ENCODE measurements at regions of chr6 and their contacts with region 1.

Region 1: DNA sequence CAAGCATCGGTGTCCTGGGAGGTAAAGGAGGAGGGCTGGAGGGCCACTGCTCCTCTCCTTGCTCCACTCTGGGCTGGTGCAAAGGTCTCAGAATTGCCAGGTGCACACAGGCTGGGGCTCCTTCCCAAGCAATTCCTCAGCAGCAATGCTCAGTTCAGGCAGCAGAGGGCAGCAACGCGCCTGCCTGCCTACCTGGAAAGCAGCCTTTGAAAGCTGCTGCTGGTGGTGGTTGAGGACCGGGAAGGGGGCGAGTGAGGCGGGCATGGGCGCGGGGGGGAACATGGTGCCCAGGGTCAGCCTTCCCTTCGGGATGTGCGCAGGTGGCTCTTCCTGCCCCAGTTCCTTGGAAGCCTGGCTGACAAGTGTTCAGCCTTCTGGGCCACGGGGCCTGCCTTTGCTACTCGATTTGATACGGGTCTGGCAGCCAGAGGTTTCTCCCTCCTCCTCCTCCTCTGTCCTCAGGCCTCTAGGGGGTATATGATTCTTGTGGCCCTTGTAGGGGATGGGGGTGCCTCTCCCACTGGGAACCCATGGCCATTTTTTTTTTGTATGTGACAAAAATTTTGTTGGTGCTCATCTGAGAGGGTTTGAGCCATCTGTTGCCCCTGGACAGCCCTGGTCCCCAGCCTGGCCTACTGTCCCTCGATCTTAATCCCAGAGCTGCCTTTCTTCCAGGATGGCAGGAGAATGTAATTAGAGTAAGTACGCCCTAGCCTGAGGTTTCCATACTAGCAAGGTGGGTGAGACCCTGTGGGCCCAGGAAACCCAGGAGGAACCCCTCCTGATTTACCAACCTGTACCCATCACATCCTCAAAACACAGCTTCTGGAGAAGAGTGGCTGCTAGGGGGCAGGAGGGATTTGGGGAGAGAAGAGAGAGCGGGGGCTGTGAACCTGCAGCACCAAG is 20.1 kb downstream of the MRPS18A start:
- DNase-seq: peak; percentile 75 to 94 (median 85)
- H3K4me3 ChIP-seq: no peak overlapping the region
- H3K27ac ChIP-seq: peak overlapping the region in 2 of 5 donors; percentile 42 to 44
- H3K4me1 ChIP-seq: peaks cover 15 to 36% of the 10 kb centered on the region in 2 donors
- H3K27me3 ChIP-seq: no peaks in the 10 kb centered on the region
- CTCF ChIP-seq: peak; percentile 86 to 95 (median 95)
- POLR2A ChIP-seq: no peak

Region 2: DNA sequence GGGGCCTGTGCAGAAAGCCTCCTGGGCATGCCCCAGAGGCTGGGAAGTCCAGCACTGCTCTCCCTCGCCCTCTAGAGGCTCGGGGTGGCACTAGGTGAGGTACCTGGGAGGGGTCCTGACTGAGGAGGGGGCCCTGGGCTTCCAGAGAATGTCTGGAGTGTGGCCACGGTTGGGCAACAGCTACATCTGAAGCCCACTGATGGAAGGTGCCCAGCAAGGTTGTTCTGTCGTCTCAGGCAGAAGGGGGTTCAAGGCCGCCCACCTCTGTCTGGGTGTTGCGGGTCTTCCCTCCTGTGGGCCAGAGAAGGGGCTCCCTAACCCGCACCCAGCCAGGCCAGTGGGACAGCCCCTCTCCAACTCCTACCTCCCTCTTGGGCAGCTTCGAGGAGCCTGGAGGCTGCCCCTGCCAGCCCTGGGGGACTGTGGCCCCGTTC is 91.1 kb after region 1 on chr6:
- intact Hi-C with region 1: loop called in 1 of 2 experiments (anchors 5 kb)
- DNase-seq: no peak
- H3K4me3 ChIP-seq: no peak overlapping the region
- H3K27ac ChIP-seq: no peak overlapping the region
- H3K4me1 ChIP-seq: peaks cover 5 to 6% of the 10 kb centered on the region in 2 donors
- H3K27me3 ChIP-seq: no peaks in the 10 kb centered on the region
- CTCF ChIP-seq: peak; percentile 31 to 62 (median 57)
- POLR2A ChIP-seq: no peak

Region 3: GRCh38 chr6:44074439-44075136 is 407.1 kb after region 1 on chr6:
- intact Hi-C with region 1: loop called (anchors 5 kb)
- DNase-seq: peak; percentile 68 to 87 (median 78)
- H3K4me3 ChIP-seq: no peak overlapping the region
- H3K27ac ChIP-seq: peak overlapping the region in 1 of 5 donors; percentile 76
- H3K4me1 ChIP-seq: peaks cover 8 to 19% of the 10 kb centered on the region in 2 donors
- H3K27me3 ChIP-seq: no peaks in the 10 kb centered on the region
- CTCF ChIP-seq: peak; percentile 88 to 96 (median 91)
- POLR2A ChIP-seq: no peak

Measured in adrenal gland (tissue), 19 donors.